ENCODE measurements at regions of chr15 and their contacts with region 1.

Region 1: DNA sequence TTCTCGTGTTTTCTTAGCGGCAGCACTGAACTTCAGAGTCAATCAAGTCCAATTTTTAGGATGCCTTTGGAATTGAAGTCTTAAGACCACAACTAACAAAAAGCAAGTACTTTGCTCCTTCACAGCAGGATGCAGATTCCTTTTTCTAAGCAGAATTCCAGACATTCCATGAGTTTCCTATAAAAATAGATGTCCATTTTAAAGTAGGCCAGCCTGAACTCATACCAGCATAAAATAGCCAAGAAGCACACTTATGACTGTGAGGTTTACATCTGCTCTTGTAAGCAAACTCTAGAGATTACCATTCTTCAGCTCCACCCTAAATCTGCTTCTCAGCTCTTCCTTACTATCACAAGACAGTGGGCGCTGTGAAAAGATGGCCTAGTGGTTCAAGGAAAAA is 85.8 kb downstream of the THBS1 start:
- DNase-seq: no peak
- H3K4me3 ChIP-seq: no peak overlapping the region
- H3K27ac ChIP-seq: no peak overlapping the region
- H3K4me1 ChIP-seq: peaks cover 1% of the 10 kb centered on the region
- H3K27me3 ChIP-seq: no peaks in the 10 kb centered on the region
- CTCF ChIP-seq: no peak

Region 2: DNA sequence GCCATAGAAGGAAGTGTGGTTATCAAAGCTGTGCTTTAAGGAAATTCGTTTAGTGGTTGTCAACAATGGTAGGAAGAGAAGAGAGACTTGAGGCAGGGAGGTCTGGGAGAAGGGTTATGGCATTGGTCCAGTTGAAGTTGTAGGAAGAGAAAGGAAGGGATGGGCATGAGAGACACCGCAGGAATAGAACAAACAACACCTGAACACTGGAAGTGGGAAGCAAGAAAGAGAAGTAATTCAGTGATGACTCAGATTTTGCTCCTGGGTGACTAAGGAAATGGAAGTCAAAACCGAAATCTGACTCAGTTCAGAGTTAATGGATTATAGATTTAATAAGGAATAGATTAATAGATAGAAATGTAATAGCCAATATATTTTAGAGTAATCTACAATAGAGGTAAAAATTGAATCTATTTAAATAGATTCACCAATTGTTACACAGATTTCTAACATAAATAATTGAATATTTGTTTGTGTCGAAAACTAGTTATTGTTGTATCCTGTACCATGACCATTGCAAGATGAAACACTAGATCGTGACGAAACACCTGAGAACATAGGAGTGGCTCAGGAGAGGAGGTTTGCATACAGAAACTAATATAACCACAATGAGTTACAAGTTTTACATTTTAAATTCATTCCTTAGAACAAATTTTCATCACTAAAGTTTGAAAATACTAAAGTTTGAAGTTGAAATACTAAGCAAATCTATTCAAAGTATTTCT is 49.8 kb before region 1 on chr15:
- CTCF ChIA-PET with region 1: no interaction called
- dilution Hi-C with region 1: loop called (anchors 5 kb)
- in situ Hi-C with region 1: no loop called
- intact Hi-C with region 1: no loop called
- DNase-seq: peak; percentile 88
- H3K4me3 ChIP-seq: peak overlapping the region in 2 of 3 experiments; percentile 4 to 10
- H3K27ac ChIP-seq: peak overlapping the region; percentile 95
- H3K4me1 ChIP-seq: peaks cover 34% of the 10 kb centered on the region
- H3K27me3 ChIP-seq: no peaks in the 10 kb centered on the region
- CTCF ChIP-seq: no peak

Region 3: GRCh38 chr15:39649757-39650156 is 16.9 kb before region 1 on chr15:
- CTCF ChIA-PET with region 1: no interaction called
- dilution Hi-C with region 1: no loop called
- in situ Hi-C with region 1: no loop called
- intact Hi-C with region 1: no loop called
- DNase-seq: no peak
- H3K4me3 ChIP-seq: no peak overlapping the region
- H3K27ac ChIP-seq: no peak overlapping the region
- H3K4me1 ChIP-seq: no peaks in the 10 kb centered on the region
- H3K27me3 ChIP-seq: no peaks in the 10 kb centered on the region
- CTCF ChIP-seq: no peak

Region 4: DNA sequence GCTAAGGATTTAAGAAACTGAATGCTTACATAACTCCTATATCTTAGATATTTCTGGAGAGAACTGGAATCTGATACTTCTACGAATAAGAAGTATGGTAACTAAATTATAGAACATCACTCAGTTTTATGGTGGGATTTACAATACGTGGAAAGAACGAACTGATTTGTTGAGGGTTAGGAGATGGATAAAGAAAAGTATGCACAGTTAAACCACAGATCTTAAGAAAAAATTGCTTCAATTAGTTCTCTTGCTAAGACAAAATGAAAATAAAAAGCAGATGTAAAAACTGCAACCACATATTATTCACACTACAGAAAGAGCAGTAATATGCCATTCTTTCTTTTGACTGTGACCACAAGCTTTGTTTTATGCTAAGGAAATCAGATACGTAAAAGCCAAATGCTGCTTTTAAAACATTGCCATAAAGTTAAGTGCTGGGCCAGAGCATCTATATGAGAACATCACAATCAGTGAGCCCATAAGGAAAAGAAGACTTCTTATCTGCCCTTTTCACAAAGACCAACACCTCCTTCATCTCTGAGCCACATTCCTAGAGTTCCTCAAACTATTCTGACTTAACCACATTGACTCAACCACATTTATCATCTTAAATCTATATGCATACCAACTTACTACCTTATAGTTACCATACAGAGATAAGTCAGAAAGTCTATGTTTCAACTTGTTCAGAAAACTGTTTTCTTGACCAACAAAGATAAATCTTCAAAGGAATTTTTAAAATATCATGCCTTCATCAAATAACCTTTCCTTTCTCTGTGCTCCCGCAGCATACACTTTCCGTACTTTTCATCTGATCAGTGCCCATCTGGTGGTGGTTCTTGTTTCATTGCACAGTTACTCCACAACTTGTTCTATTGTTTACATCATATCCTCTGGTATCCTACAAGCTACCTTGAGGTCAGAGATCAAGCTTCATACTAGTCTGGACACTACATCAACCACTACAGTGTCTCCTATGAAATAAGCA is 54.2 kb after region 1 on chr15:
- CTCF ChIA-PET with region 1: no interaction called
- dilution Hi-C with region 1: loop called (anchors 5 kb)
- in situ Hi-C with region 1: no loop called
- intact Hi-C with region 1: no loop called
- DNase-seq: peak; percentile 77
- H3K4me3 ChIP-seq: no peak overlapping the region
- H3K27ac ChIP-seq: no peak overlapping the region
- H3K4me1 ChIP-seq: peaks cover 25% of the 10 kb centered on the region
- H3K27me3 ChIP-seq: no peaks in the 10 kb centered on the region
- CTCF ChIP-seq: no peak